AG04450 (cell line): ENCODE measurements at regions of chr2 and their contacts with region 1.

Region 1: DNA sequence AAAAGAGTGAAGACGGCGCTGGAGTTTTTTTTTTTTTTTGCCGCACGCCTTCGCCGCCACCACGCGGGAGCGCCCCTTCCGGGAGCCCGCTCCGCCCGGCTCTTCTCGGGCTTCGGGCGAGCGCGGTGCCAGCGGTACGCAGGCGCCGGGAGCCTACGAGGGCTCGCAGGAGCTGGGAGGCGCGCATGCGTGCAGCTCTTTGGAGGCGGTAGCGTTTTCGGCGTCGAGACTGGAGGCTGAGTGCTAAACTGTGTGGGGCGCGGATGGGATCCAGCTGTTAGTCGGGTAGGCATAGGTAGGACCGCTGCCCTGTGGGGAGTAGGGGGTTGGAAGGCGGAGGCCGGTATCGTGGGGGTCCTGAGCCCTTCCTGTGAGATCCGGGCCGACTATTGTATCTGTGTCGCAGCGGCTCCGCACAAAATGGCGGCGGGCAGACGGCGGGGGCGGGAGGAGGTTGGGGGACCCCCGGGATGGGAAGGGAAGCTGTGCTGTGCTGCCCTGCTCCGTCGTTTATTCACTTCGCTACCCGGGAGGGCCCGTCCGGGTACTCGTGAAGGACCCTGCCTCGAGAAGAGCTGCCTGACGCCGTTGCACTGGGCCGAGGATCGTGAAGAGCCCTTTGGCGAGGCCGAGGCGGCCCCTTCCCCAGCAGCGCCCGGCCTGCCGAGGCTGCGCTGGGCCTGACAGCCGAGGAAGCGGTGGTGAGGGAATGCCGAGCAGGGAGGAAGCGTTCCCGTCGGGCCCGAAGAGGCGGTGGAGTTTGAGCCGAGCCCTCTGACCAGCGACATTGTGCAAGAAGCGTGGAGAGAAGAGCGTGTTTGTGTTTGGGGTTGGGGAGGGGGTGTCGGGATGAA is at the start of gene ZNF638:
- DNase-seq: peak; percentile 78
- H3K4me3 ChIP-seq: peak within 1 kb of the TSS; percentile 98
- H3K27ac ChIP-seq: peak within 1 kb of the TSS; percentile 80
- H3K27me3 ChIP-seq: peaks cover 2% of the 10 kb centered on the region
- CTCF ChIP-seq: peak; percentile 67
- polyA plus RNA-seq, gene ZNF638: 75.3 and 105 TPM in 2 replicates

Region 2: DNA sequence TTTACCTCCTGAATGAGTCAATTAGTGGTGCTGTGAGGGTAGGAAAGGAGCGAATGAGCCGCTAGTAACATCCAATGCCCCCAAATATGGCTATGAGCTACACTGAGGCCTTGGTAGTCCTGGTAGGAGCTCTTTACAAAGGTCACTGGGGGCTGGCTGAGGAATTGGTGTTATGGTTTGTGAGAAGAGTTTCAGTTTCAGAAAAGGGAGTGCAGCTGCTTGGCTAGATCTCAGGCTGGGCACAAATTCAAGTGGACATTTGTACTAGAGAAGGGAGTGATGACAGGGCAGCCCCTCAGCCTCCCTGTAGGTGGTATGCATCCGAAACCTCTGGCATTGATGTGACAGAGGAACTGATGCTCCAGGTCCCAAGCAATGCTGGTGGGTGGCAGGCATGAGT is 91.0 kb before region 1 on chr2:
- CTCF ChIA-PET with region 1: no interaction called
- POLR2A ChIA-PET with region 1: no interaction called
- DNase-seq: no peak
- H3K4me3 ChIP-seq: no peak overlapping the region
- H3K27ac ChIP-seq: no peak overlapping the region
- H3K27me3 ChIP-seq: peaks cover 10% of the 10 kb centered on the region
- CTCF ChIP-seq: no peak

Region 3: DNA sequence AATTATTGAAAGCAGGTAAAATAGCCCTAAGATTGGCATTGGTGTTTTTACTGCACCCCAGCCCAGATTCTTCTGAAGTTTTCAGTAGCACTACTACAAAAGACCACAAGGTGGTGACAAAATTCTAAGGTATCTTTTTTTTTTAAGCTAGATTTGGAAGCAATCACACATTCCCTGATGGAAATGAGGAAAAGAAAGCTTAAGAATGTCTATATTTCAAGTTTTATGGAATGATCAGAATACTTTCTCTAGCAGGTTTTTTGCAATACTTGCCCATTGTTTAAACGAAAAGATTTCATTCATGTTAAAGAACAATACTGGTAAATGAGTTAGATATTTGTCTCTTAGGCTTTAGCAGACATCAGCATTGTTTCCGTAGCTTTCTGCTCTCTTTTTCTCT is 32.3 kb before region 1 on chr2:
- CTCF ChIA-PET with region 1: interaction called, 95 read pairs
- POLR2A ChIA-PET with region 1: interaction called, 10 read pairs
- DNase-seq: no peak
- H3K4me3 ChIP-seq: no peak overlapping the region
- H3K27ac ChIP-seq: no peak overlapping the region
- H3K27me3 ChIP-seq: peaks cover 8% of the 10 kb centered on the region
- CTCF ChIP-seq: peak; percentile 78

Region 4: DNA sequence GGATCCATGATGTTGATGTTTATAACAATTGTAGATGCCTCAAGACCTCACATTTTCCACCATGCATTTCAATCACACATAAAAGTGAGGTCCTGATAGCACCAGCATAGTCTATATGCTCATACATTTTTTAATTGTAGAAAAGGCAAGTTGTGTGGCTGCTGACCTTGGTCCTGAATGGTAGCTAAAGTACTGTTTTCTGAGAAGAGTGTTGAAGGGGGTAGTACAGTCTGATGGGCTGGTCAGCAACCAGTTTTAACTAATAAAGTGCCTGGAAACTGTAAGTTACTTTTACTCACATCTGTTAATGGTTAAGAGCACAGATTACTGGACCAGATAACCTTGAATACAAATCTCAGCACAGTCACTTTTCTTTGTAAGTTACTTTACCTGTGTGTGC is 15.7 kb after region 1 on chr2:
- CTCF ChIA-PET with region 1: interaction called, 53 read pairs
- POLR2A ChIA-PET with region 1: interaction called, 3 read pairs
- DNase-seq: no peak
- H3K4me3 ChIP-seq: no peak overlapping the region
- H3K27ac ChIP-seq: no peak overlapping the region
- H3K27me3 ChIP-seq: no peaks in the 10 kb centered on the region
- CTCF ChIP-seq: no peak

Region 5: DNA sequence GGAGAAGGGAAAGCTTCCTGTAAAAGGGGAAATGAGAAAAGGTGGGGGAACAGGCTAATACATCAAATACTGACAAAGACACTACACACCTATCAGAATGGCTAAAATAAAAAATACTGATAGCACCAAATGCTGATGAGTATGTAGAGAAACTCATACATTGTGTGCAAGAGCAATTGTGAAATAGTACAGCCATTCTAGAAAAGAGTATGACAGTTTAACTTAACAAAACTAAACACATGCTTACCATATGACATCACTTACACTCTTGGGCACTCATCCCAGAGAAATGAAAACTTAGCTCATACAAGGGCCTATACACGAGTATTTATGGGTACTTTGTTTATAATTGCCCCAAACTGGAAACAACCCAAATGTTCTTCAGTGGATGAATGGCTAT is 53.2 kb after region 1 on chr2:
- CTCF ChIA-PET with region 1: interaction called, 32 read pairs
- POLR2A ChIA-PET with region 1: interaction called, 8 read pairs
- DNase-seq: peak; percentile 58
- H3K4me3 ChIP-seq: no peak overlapping the region
- H3K27ac ChIP-seq: no peak overlapping the region
- H3K27me3 ChIP-seq: no peaks in the 10 kb centered on the region
- CTCF ChIP-seq: no peak

Region 6: GRCh38 chr2:71447280-71447679 is 115.5 kb after region 1 on chr2:
- CTCF ChIA-PET with region 1: interaction called, 13 read pairs
- POLR2A ChIA-PET with region 1: no interaction called
- DNase-seq: no peak
- H3K4me3 ChIP-seq: no peak overlapping the region
- H3K27ac ChIP-seq: no peak overlapping the region
- H3K27me3 ChIP-seq: peaks cover 7% of the 10 kb centered on the region
- CTCF ChIP-seq: no peak

Region 7: GRCh38 chr2:71510196-71510807 is 178.5 kb after region 1 on chr2:
- CTCF ChIA-PET with region 1: interaction called, 17 read pairs
- POLR2A ChIA-PET with region 1: no interaction called
- DNase-seq: peak; percentile 27
- H3K4me3 ChIP-seq: no peak overlapping the region
- H3K27ac ChIP-seq: no peak overlapping the region
- H3K27me3 ChIP-seq: peaks cover 18% of the 10 kb centered on the region
- CTCF ChIP-seq: peak; percentile 94